ENCODE measurements at regions of chr1 and their contacts with region 1.

Region 1: DNA sequence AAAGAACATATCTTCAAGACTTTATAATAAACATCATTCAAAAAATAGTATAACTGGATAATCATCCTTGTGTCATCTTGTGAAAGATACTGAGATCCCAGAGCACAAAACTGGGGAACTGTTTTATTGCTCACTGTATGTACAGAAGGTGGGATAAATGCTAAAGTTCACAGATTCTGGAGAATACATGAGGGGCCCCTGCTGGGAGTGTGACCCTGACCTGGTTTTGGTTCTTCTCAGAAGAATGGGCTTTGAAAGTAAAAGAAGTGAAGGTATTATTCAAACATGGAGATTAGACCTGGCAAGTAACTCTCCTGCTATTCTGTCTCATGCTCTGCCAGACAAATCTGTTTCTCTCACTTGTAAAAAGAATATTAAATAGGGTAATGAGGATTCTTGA is 14.5 kb downstream of the WDR26 start:
- DNase-seq: no peak
- H3K4me3 ChIP-seq: no peak overlapping the region
- H3K27ac ChIP-seq: no peak overlapping the region
- H3K4me1 ChIP-seq: peaks cover 0 to 9% (median 4%) of the 10 kb centered on the region in 4 donors
- H3K27me3 ChIP-seq: no peaks in the 10 kb centered on the region
- CTCF ChIP-seq: no peak
- EP300 ChIP-seq: no peak
- POLR2A ChIP-seq: no peak

Region 2: GRCh38 chr1:224245188-224245587 is 174.9 kb before region 1 on chr1:
- in situ Hi-C with region 1: no loop called
- intact Hi-C with region 1: no loop called
- DNase-seq: peak; percentile 53
- H3K4me3 ChIP-seq: no peak overlapping the region
- H3K27ac ChIP-seq: peak overlapping the region; percentile 36 to 46 (median 40)
- H3K4me1 ChIP-seq: peaks cover 4 to 12% (median 6%) of the 10 kb centered on the region in 4 donors
- H3K27me3 ChIP-seq: no peaks in the 10 kb centered on the region
- CTCF ChIP-seq: no peak
- EP300 ChIP-seq: no peak
- POLR2A ChIP-seq: peak; percentile 24

Region 3: GRCh38 chr1:224300314-224300713 is 119.8 kb before region 1 on chr1:
- in situ Hi-C with region 1: no loop called
- intact Hi-C with region 1: loop called (anchors 5 kb)
- DNase-seq: no peak
- H3K4me3 ChIP-seq: no peak overlapping the region
- H3K27ac ChIP-seq: no peak overlapping the region
- H3K4me1 ChIP-seq: peaks cover 0 to 13% (median 3%) of the 10 kb centered on the region in 4 donors
- H3K27me3 ChIP-seq: no peaks in the 10 kb centered on the region
- CTCF ChIP-seq: no peak
- EP300 ChIP-seq: no peak
- POLR2A ChIP-seq: no peak

Region 4: DNA sequence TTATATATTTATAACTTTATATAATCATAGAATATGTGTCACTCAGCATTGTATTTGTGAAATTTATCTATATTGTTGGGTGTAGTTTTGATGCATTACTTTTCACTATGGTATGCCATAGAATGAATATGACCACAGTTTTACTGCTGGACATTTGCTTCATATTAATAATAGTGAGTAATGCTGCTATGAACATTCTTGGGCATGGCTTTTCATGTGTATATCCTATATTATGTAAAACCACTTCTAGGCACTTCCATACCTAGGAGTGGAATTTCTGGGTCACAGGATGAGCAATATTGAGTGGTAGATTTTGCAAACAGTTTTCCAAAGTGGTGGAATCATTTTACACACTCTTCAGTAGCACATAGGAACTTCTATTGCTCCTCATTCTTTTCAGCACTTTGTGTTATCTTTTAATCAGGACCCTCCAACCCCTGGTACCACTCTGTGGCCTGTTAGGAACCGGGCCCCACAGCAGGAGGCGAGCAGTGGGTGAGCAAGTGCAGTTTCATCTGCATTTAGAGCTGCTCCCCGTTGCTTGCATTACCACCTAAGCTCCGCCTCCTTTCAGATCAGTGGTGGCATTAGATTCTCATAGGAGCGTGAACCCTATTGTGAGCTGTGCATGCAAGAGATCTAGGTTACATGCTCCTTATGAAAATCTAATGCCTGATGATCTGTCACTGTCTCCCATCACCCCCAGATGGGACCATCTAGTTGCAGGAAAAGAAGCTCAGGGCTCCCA is 140.0 kb after region 1 on chr1:
- in situ Hi-C with region 1: no loop called
- intact Hi-C with region 1: no loop called
- DNase-seq: no peak
- H3K4me3 ChIP-seq: no peak overlapping the region
- H3K27ac ChIP-seq: no peak overlapping the region
- H3K4me1 ChIP-seq: no peaks in the 10 kb centered on the region
- H3K27me3 ChIP-seq: no peaks in the 10 kb centered on the region
- CTCF ChIP-seq: no peak
- EP300 ChIP-seq: no peak
- POLR2A ChIP-seq: no peak

Measured in transverse colon (tissue), 4 donors.